CD4-positive, alpha-beta T cell (primary cell): ENCODE measurements at regions of chr1 and their contacts with region 1.

Region 1: DNA sequence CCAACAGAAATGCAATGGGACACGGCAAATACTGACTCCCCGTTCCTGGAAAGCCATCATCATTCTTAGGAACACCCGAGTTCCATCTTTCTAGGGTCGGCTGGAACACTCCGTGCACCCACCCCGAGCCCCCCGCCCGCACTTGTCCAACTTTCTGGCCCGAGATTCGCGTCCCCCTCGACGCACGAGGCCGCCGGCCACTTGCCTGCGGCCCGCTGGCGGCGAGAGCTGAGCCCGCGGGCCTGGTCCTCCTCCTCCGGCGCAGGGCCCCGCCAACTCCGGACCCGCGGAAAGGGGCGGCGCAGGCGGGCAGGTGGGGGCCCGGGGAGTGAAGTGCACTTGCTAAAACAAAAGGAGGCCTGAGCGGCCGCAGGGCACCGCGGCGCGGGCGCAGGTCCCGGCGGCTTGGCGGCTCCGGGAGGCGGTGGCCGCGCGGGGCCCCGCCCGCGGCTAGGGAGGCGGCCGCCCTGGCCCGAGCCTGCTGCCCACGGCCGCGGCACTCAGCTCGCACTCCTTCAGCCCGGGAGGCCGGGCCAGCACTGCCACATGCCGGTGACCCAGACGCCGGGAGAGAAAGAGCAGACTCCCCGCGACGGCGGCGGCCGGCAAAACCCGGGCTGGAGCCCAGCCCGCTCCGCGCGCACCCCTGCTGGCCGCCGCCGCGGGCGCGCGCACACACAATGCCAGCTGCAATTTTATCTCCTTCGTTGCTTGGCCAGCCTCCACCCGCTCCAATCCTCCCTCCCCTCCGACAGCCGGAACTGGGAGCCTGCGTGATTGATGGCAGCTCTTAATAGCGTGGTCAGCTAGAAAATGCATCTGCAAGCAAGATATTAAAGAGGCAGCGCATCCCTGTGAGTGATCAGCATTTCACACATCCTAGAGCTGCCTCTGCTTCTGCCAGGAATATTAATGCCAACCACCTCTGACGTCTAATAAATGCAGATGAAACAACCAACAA is 114.3 kb downstream of the RERE start:
- DNase-seq: peak in 12 of 14 experiments; percentile 5 to 75 (median 34)
- ATAC-seq: no peak
- H3K4me3 ChIP-seq: peak overlapping the region; percentile 32
- H3K4me3 Mint-ChIP-seq: peak overlapping the region; percentile 87
- H3K27ac ChIP-seq: no peak overlapping the region
- H3K27ac Mint-ChIP-seq: peak overlapping the region; percentile 36
- H3K4me1 ChIP-seq: peaks cover 27% of the 10 kb centered on the region
- H3K4me1 Mint-ChIP-seq: peaks cover 30% of the 10 kb centered on the region
- H3K27me3 ChIP-seq: peaks cover 27 to 36% of the 10 kb centered on the region in 2 experiments
- H3K27me3 Mint-ChIP-seq: peaks cover 61% of the 10 kb centered on the region
- CTCF ChIP-seq: no peak

Region 2: GRCh38 chr1:8817406-8818324 is 114.5 kb after region 1 on chr1 and contains the start of gene RERE:
- CTCF ChIA-PET with region 1: interaction called, 5 read pairs
- POLR2A ChIA-PET with region 1: no interaction called
- intact Hi-C with region 1: loop called in 1 of 2 experiments (anchors 5 kb)
- DNase-seq: peak; percentile 93 to 99 (median 96)
- ATAC-seq: peak; percentile 95
- H3K4me3 ChIP-seq: peak within 1 kb of the TSS; percentile 96
- H3K4me3 Mint-ChIP-seq: peak within 1 kb of the TSS; percentile 92
- H3K27ac ChIP-seq: peak within 1 kb of the TSS; percentile 80 to 83
- H3K27ac Mint-ChIP-seq: peak within 1 kb of the TSS; percentile 86
- H3K4me1 ChIP-seq: peaks cover 20% of the 10 kb centered on the region
- H3K4me1 Mint-ChIP-seq: peaks cover 44% of the 10 kb centered on the region
- H3K27me3 ChIP-seq: peaks cover 0 to 4% of the 10 kb centered on the region in 2 experiments
- H3K27me3 Mint-ChIP-seq: peaks cover 11% of the 10 kb centered on the region
- CTCF ChIP-seq: no peak
- total RNA-seq, gene RERE: 78.4 to 84.0 TPM